ENCODE measurements at regions of chr2 and their contacts with region 1.

Region 1: DNA sequence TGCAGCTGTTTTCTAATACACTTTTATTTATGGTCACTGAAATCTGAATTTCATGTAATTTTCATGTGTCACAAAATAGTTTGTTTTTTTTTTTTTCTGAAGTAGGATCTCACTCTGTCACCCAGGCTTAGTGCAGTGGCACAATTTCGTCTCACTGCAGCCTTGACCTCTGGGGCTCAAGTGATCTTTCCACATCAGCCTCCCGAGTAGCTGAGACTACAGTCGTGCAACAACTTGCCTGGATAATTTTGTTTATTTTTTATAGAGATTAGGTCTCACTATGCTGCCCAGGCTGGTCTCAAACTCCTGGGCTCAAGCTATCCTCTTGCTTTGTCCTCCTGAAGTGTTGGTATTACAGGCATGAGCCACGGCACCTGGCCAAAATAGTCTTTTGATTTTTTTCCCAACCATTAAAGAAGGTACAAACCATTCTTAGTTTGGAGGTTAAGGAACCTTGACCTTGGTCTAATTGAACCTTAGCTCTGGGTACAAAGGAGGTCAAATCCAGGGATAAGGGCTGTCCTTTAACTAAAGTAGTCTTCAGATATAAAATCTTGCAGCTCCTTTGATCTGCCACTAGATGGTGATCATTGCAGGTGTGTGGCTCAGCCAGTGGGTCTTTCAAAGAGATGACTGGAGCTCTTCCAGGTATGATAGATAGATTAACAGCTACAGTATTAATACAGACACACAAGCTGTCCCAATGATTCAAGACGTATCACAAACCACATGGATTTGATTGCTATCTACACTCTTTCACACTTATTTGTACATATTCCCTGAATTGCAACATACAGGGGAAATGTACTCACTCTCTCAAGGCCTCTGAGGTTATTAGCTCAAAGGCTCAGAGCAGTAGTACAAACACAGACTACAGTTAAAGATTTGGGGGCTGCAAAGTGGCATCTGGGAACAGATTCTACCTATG is 4.7 kb upstream of the KRCC1 start:
- DNase-seq: peak in 1 of 2 donors; percentile 11
- H3K4me3 ChIP-seq: no peak overlapping the region
- H3K27ac ChIP-seq: no peak overlapping the region
- H3K4me1 ChIP-seq: peaks cover 0 to 6% of the 10 kb centered on the region in 2 donors
- H3K27me3 ChIP-seq: no peaks in the 10 kb centered on the region
- CTCF ChIP-seq: peak; percentile 55 to 78 (median 62)
- POLR2A ChIP-seq: no peak

Region 2: GRCh38 chr2:88159955-88160415 is 99.7 kb after region 1 on chr2:
- intact Hi-C with region 1: loop called (anchors 2 kb)
- DNase-seq: peak; percentile 46 to 48
- H3K4me3 ChIP-seq: no peak overlapping the region
- H3K27ac ChIP-seq: no peak overlapping the region
- H3K4me1 ChIP-seq: no peaks in the 10 kb centered on the region
- H3K27me3 ChIP-seq: no peaks in the 10 kb centered on the region
- CTCF ChIP-seq: peak; percentile 55 to 80 (median 64)
- POLR2A ChIP-seq: no peak

Region 3: GRCh38 chr2:88258208-88258607 is 198.0 kb after region 1 on chr2:
- intact Hi-C with region 1: no loop called
- DNase-seq: no peak
- H3K4me3 ChIP-seq: no peak overlapping the region
- H3K27ac ChIP-seq: no peak overlapping the region
- H3K4me1 ChIP-seq: no peaks in the 10 kb centered on the region
- H3K27me3 ChIP-seq: no peaks in the 10 kb centered on the region
- CTCF ChIP-seq: no peak
- POLR2A ChIP-seq: no peak

Region 4: GRCh38 chr2:88554189-88554588 is 493.9 kb after region 1 on chr2:
- intact Hi-C with region 1: no loop called
- DNase-seq: no peak
- H3K4me3 ChIP-seq: no peak overlapping the region
- H3K27ac ChIP-seq: no peak overlapping the region
- H3K4me1 ChIP-seq: no peaks in the 10 kb centered on the region
- H3K27me3 ChIP-seq: no peaks in the 10 kb centered on the region
- CTCF ChIP-seq: no peak
- POLR2A ChIP-seq: no peak

Measured in thyroid gland (tissue), 4 donors.